Activated B cell treated with CpG ODN at 0.5 μM for 24 hours (primary cell): ENCODE measurements at regions of chr11 and their contacts with region 1.

Region 1: GRCh38 chr11:75867775-75868374 is 52.9 kb downstream of the UVRAG start:
- DNase-seq: no peak
- ATAC-seq: peak; percentile 74
- H3K4me3 Mint-ChIP-seq: no peak overlapping the region
- H3K27ac Mint-ChIP-seq: peak overlapping the region; percentile 22
- H3K4me1 Mint-ChIP-seq: peaks cover 58% of the 10 kb centered on the region
- H3K27me3 Mint-ChIP-seq: no peaks in the 10 kb centered on the region
- CTCF ChIP-seq: no peak

Region 2: GRCh38 chr11:75547580-75548058 is 320.3 kb before region 1 on chr11:
- CTCF ChIA-PET with region 1: interaction called, 4 read pairs
- POLR2A ChIA-PET with region 1: no interaction called
- intact Hi-C with region 1: loop called (anchors 1 kb)
- DNase-seq: no peak
- ATAC-seq: peak; percentile 61
- H3K4me3 Mint-ChIP-seq: no peak overlapping the region
- H3K27ac Mint-ChIP-seq: no peak overlapping the region
- H3K4me1 Mint-ChIP-seq: no peaks in the 10 kb centered on the region
- H3K27me3 Mint-ChIP-seq: peaks cover 17% of the 10 kb centered on the region
- CTCF ChIP-seq: no peak

Region 3: DNA sequence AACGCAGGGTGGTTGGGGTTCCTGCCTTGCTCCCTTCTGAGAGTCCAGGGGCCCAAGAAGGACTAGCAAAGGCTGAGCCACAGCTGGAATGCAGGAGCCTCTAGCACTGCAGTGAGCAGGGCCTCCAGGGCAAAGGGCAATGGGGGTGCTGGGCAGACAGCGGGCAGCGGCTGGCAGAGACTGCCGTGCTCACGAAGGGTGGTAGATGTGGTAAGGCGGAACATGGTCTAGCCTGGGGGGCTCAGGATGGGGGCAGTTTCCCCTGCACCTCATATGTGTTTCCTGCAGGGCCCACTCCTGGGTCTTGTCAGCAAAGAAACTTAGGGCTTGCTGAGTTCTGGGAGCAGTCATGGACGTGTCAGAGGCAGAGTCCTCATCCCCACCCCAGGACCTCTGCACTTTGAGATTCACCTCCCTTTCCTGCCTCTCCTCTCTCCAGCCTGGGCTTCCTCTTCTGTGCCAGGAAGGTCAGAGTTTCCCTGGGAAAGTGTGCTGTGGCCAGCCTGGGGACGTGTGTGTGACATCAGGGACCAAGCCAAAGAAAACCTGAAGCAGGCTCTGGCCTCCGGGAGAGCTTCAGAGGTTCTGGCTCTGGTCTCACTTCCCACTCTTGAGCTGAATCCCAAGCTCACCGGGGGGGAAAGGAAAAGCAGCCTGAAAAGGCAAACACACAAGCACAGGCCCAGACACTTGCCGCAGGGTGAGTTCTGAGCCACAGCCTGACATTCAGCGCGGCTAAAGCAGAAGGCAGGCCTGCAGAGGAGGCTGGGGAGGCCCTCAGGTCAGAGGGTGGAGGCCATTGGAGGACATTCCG is 145.8 kb before region 1 on chr11:
- CTCF ChIA-PET with region 1: interaction called, 7 read pairs
- POLR2A ChIA-PET with region 1: no interaction called
- intact Hi-C with region 1: loop called (anchors 1 kb)
- DNase-seq: no peak
- ATAC-seq: no peak
- H3K4me3 Mint-ChIP-seq: no peak overlapping the region
- H3K27ac Mint-ChIP-seq: no peak overlapping the region
- H3K4me1 Mint-ChIP-seq: no peaks in the 10 kb centered on the region
- H3K27me3 Mint-ChIP-seq: no peaks in the 10 kb centered on the region
- CTCF ChIP-seq: no peak

Region 4: DNA sequence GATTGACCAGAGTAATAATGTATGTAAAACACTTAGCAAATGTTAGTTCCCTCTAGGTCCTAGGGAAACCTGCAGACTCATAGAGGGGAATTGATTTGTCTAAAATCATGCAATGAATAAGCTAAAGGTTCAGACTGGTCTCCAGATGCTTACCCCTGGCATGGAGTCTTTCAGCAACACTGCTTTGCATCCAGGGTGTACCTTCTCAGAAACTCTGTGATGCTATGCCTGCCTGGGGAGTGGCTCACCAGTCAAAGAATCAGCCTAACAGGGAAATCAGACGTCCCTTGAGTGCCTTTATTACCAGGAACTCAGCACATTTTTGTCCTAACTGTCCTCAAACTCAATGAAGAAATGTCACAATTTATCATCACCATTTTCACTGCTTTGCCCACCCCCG is 58.8 kb before region 1 on chr11:
- CTCF ChIA-PET with region 1: interaction called, 258 read pairs
- POLR2A ChIA-PET with region 1: interaction called, 3 read pairs
- intact Hi-C with region 1: loop called (anchors 1 kb)
- DNase-seq: no peak
- ATAC-seq: peak; percentile 18
- H3K4me3 Mint-ChIP-seq: no peak overlapping the region
- H3K27ac Mint-ChIP-seq: no peak overlapping the region
- H3K4me1 Mint-ChIP-seq: peaks cover 47% of the 10 kb centered on the region
- H3K27me3 Mint-ChIP-seq: no peaks in the 10 kb centered on the region
- CTCF ChIP-seq: no peak

Region 5: GRCh38 chr11:75826461-75827230 is 41.2 kb before region 1 on chr11:
- CTCF ChIA-PET with region 1: interaction called, 5 read pairs
- POLR2A ChIA-PET with region 1: interaction called, 9 read pairs
- intact Hi-C with region 1: loop called (anchors 1 kb)
- DNase-seq: no peak
- ATAC-seq: no peak
- H3K4me3 Mint-ChIP-seq: peak overlapping the region; percentile 63
- H3K27ac Mint-ChIP-seq: peak overlapping the region; percentile 76
- H3K4me1 Mint-ChIP-seq: peaks cover 87% of the 10 kb centered on the region
- H3K27me3 Mint-ChIP-seq: no peaks in the 10 kb centered on the region
- CTCF ChIP-seq: no peak

Region 6: DNA sequence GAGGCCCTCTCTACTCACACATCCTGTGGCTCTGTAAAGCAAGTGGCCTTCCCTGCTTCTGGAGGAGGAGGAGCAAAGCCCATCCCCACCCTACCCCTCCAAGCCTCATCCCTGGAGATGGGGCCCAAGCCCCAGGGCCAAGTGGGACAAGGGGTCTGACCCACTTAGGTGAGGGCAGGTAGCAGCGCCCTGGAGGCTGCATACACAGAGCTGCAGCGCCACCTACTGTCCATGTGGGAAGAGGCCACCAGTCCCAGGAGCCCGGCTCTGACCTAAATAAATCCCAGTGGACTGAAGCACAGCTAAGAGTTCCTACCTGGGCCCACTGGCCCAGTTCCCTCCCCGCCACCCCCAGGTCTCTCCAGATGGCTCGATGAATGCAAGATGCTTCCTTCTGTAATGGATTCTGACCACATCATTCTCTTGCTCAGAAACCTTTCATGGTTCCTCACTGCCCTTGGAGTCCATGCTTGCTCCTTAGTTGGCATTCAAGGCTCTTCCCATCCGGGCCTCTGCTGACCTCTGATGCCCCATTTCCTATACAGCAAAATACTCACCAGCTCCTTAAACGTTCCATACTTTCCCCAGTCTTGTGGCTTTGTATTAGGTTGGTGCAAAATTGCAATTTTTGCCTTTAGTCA is 451.0 kb after region 1 on chr11:
- CTCF ChIA-PET with region 1: interaction called, 3 read pairs
- POLR2A ChIA-PET with region 1: no interaction called
- intact Hi-C with region 1: loop called (anchors 1 kb)
- DNase-seq: peak; percentile 73
- ATAC-seq: peak; percentile 97
- H3K4me3 Mint-ChIP-seq: no peak overlapping the region
- H3K27ac Mint-ChIP-seq: no peak overlapping the region
- H3K4me1 Mint-ChIP-seq: peaks cover 2% of the 10 kb centered on the region
- H3K27me3 Mint-ChIP-seq: peaks cover 40% of the 10 kb centered on the region
- CTCF ChIP-seq: no peak

Region 7: GRCh38 chr11:76459299-76459698 is 591.4 kb after region 1 on chr11:
- CTCF ChIA-PET with region 1: no interaction called
- POLR2A ChIA-PET with region 1: no interaction called
- intact Hi-C with region 1: no loop called
- DNase-seq: no peak
- ATAC-seq: no peak
- H3K4me3 Mint-ChIP-seq: no peak overlapping the region
- H3K27ac Mint-ChIP-seq: no peak overlapping the region
- H3K4me1 Mint-ChIP-seq: peaks cover 2% of the 10 kb centered on the region
- H3K27me3 Mint-ChIP-seq: no peaks in the 10 kb centered on the region
- CTCF ChIP-seq: no peak